Lower leg skin (tissue), 4 donors: ENCODE measurements at regions of chr3 and their contacts with region 1.

Region 1: DNA sequence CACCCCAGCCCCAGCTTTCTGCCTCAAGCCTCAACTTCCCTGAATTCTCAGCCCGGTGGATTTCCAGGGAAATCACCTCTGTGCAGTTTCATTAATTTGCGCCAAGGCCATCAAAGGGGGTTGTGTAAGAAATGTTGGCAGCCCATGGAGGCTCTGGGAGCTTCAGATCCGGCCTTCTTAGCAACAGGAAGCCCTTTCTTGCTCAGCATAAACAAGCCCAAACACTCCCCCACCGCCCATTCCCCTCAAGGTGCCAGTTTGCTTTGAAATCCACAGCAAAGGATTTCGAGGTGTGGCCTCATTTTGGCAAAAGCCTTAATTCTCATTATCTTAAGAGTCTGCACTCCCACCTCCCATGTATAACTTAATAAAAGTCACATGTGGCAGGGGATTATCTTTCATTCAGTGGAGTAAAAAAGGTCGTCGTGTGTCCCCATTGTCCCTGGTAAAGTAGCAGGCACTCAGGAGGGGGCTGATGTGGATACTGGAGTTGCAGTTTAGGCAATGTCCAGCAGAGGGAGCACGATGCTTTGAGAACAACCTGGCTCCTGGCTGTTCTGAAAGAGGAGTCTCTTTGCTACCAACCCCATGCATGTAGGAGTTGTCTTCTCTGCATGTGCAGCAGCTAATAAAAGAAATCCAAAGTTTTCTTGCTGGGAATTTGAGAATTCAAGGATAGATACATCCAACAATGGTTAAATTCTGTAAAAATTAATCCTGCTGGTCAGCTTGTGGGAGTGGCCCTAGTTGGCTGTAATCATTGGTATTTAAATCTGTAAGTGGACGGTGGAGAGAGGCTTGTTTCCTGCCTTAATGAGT is 39.5 kb downstream of the EBLN2 start:
- DNase-seq: peak; percentile 88 to 96
- H3K4me3 ChIP-seq: no peak overlapping the region
- CTCF ChIP-seq: peak in 1 of 3 donors; percentile 91
- POLR2A ChIP-seq: no peak

Region 2: DNA sequence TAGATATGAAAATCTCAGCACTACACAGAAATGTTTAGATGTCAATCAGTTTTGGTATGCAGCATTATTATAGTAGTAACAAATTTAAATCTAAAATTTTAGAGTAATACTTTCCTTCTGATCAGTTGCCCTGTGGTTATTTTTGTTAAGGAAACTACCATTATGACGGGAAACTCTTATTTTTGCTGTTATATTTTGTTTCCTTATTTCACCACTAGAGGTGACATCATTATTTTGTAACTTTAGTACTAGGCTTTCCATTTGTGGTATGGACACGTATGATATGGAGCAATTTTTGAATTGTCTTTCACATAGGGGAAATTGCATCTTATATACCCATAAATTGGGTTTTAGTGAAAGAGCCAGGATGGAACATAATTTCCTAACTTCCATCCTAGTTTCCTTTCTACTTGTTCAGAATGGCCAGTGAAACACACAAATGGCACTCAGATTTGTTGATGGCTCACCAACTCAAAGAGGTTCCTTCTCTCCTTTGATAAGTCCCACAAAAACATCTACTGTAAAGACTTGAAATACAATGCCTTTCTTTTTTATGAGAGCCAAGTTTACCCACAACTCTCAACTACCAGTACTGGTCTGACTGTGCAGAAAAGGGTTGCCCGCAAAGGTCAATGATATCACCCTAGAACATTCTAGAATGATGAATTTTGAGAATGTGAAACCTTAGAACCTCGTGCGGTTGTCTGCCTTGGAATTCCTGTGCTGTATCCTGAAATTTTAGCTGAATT is 123.7 kb before region 1 on chr3:
- intact Hi-C with region 1: no loop called
- DNase-seq: no peak
- H3K4me3 ChIP-seq: no peak overlapping the region
- CTCF ChIP-seq: no peak
- POLR2A ChIP-seq: no peak

Region 3: GRCh38 chr3:73432023-73432705 is 331.2 kb after region 1 on chr3:
- intact Hi-C with region 1: loop called (anchors 10 kb)
- DNase-seq: no peak
- H3K4me3 ChIP-seq: no peak overlapping the region
- CTCF ChIP-seq: no peak
- POLR2A ChIP-seq: no peak

Region 4: DNA sequence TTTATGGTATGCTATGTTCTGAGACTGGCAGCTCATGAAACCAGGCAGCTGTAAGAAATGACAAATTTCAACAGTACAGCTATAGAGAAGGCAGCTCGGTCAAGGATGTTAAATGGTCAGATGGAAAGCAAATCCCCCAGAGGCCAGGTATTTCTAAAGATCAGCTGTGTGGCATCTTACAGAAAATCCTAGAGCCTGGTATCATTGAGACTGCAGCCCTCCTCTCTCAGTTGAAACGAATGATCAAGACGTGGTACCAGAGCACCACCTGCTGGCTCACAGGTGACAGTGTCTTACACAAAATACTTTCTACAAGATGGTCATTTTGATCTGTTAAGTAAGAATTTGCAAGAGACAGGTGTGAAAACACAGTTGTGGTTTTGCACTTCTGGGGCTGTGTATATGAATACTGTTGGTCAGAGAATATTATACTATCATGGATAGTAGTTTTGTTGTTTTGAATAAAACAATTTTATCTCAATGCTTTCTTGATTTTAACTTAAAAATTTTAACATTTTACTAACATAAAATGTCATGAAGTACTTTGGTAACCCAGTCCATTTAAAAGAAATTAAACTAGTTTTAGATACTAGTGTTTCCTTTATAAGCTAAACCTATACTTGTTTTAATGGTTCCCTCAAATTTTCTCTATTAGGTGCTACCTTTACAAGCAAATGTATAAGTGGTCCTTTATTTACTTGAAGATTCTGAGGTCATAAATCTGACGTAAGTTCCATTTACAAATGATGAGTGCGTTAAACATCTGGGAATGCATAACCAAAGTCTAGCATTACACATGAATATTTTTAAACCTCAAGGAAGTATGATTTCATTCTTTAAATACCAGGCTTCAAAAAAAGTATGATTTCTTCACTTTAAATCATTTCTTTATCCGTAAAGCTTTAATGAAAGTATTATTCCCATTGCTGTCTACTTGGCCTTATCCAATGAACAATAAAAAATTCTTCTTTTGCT is 401.9 kb after region 1 on chr3:
- intact Hi-C with region 1: loop called (anchors 5 kb)
- DNase-seq: peak; percentile 47 to 92
- H3K4me3 ChIP-seq: no peak overlapping the region
- CTCF ChIP-seq: peak in 1 of 3 donors; percentile 53
- POLR2A ChIP-seq: no peak